ENCODE measurements at regions of chr14 and their contacts with region 1.

Region 1: GRCh38 chr14:25042362-25043299 is 7.3 kb downstream of the STXBP6 start:
- DNase-seq: peak; percentile 31
- H3K4me3 ChIP-seq: no peak overlapping the region
- H3K27ac ChIP-seq: peak overlapping the region; percentile 6 to 40
- H3K4me1 ChIP-seq: no peaks in the 10 kb centered on the region
- H3K27me3 ChIP-seq: no peaks in the 10 kb centered on the region
- CTCF ChIP-seq: peak in 3 of 4 experiments; percentile 45 to 75 (median 47)
- POLR2A ChIP-seq: no peak

Region 2: GRCh38 chr14:24817212-24818057 is 225.2 kb before region 1 on chr14:
- intact Hi-C with region 1: loop called (anchors 5 kb)
- DNase-seq: no peak
- H3K4me3 ChIP-seq: no peak overlapping the region
- H3K27ac ChIP-seq: peak overlapping the region; percentile 46 to 56
- H3K4me1 ChIP-seq: peaks cover 23% of the 10 kb centered on the region
- H3K27me3 ChIP-seq: no peaks in the 10 kb centered on the region
- CTCF ChIP-seq: peak in 3 of 4 experiments; percentile 23 to 26 (median 24)
- POLR2A ChIP-seq: no peak